Mammary epithelial cell (primary cell): ENCODE measurements at regions of chr10 and their contacts with region 1.

Region 1: DNA sequence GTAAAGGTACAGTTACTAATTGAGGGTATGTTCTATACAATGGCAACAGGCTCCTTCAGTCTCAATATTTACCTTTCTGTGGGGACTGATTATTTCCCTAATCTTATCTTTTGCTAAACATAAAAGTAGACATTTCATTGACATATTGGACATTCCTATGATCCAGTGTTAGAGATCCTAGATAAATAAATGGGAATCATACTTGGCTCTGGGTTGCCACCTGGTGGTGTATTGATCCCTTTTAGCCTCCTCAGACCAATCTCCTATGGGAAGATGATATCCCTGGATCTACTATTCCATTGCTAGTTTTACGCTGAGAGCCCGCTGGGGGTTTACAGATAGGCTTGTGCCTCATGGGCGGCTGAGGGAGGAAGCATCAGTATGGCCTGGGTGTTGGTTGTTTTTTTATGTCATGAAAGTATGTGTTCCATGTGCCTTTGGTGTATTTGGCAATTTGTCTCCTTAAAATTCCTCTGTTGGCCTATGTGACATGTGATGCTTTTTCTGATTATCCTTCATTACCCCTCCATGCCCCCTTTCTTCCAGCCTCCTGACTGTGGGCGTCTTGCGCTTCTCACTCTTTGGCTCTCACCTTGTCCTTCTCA is 18.8 kb downstream of the CELF2 start:
- DNase-seq: peak; percentile 19
- H3K4me3 ChIP-seq: no peak overlapping the region
- H3K27ac ChIP-seq: no peak overlapping the region
- H3K4me1 ChIP-seq: peaks cover 4% of the 10 kb centered on the region
- H3K27me3 ChIP-seq: no peaks in the 10 kb centered on the region
- CTCF ChIP-seq: peak; percentile 49 to 65

Region 2: GRCh38 chr10:9342885-9343570 is 1693.5 kb before region 1 on chr10:
- CTCF ChIA-PET with region 1: interaction called, 5 read pairs
- dilution Hi-C with region 1: no loop called
- in situ Hi-C with region 1: loop called (anchors 25 kb)
- intact Hi-C with region 1: loop called (anchors 1 kb)
- DNase-seq: peak; percentile 6
- H3K4me3 ChIP-seq: no peak overlapping the region
- H3K27ac ChIP-seq: no peak overlapping the region
- H3K4me1 ChIP-seq: no peaks in the 10 kb centered on the region
- H3K27me3 ChIP-seq: no peaks in the 10 kb centered on the region
- CTCF ChIP-seq: peak; percentile 67 to 72

Region 3: DNA sequence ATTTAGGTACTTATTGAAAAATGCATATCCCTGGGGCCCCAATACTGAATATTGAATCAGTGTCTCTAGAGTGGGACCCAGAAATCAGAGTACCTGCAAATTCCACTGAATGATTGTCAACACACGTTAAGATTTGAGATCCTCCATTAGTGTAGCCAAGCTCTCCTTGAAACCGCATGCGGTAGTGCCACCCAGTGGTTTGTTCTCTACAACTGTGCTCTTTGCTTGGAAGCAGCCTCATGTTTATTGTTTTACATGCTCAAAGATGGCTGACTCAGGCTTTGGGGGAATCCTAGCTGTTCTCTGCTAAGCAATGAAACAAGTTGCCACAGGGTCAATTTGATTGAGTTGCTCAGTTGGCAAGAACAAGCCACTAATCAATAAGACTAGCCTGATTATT is 359.0 kb before region 1 on chr10:
- CTCF ChIA-PET with region 1: no interaction called
- dilution Hi-C with region 1: no loop called
- in situ Hi-C with region 1: no loop called
- intact Hi-C with region 1: loop called (anchors 5 kb)
- DNase-seq: peak; percentile 5
- H3K4me3 ChIP-seq: no peak overlapping the region
- H3K27ac ChIP-seq: no peak overlapping the region
- H3K4me1 ChIP-seq: no peaks in the 10 kb centered on the region
- H3K27me3 ChIP-seq: no peaks in the 10 kb centered on the region
- CTCF ChIP-seq: peak; percentile 18 to 47

Region 4: DNA sequence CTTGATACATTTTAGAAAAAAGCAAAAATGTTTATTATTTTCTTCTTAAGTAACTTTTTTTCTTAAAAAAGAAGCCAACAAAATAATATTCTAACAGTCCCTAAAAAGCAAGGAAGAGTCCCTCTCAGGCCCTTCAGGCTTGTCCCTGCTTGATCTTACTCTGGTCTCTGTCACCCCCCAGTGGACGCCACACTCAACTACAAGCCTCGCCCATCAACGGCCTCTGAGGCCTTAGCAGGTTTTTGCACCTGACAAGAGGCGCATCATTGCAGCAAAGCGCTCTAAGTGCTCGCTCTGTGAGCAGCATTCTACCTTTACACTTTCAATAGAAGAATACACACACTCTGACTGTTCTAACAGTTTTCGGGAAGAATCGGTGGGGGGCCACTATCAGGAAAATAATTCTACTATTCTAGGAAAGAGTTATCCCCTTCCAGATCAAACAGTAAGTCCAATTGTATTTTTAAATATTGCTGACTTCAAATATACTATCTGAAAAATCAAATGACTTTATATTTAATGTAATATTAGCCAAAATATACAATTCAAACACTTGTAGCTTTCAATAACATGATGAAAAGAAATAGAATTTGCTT is 435.7 kb after region 1 on chr10:
- CTCF ChIA-PET with region 1: no interaction called
- dilution Hi-C with region 1: no loop called
- in situ Hi-C with region 1: no loop called
- intact Hi-C with region 1: loop called (anchors 10 kb)
- DNase-seq: peak; percentile 45
- H3K4me3 ChIP-seq: no peak overlapping the region
- H3K27ac ChIP-seq: no peak overlapping the region
- H3K4me1 ChIP-seq: no peaks in the 10 kb centered on the region
- H3K27me3 ChIP-seq: no peaks in the 10 kb centered on the region
- CTCF ChIP-seq: peak; percentile 76 to 91